Naive thymus-derived CD4-positive, alpha-beta T cell (primary cell): ENCODE measurements at regions of chrX and their contacts with region 1.

Region 1: DNA sequence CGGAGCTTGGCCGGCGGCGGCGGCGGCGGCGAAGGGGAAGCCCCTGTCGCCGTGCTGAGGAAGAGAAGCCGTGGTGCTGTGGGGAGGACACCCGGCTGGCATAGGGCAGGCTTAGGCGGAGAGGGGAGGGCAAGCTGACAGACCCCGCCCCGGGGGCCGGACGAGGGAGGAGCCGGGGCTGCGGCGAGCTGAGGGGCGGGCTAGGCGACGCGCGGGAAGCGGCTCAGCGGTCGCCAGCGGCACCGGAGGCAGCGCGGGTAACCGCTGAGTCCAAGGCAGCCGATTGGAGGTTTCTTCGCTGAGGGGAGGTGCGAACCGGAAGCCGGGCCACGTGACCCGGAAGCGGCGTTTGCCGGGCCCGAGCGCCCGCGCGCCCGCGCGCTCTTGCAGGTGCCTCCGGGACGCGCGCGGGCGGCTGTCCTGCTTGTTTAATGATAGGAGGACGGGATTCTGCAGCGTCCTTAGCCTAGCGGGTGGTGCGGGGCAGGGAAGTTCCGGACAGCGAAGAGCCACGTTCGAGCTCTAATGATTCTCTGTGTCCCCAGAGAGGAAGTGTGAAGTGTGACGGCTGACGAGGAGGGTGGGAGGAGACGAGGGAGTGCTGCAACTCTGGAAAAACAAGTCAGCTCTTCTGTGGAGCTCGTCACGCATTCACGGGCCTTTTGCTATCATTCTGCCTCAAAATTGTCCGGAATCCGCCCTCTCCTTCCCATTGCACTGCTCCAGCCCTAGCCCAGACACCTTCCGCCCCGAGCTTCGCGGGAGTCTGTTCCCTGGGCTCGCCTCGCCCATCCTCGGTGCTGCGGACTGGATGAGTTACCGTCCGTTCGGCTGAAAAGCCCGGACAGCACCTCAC is at the start of gene AP1S2:
- DNase-seq: peak; percentile 90 to 100 (median 99)
- ATAC-seq: peak; percentile 97
- H3K4me3 ChIP-seq: peak within 1 kb of the TSS; percentile 72
- H3K4me3 Mint-ChIP-seq: peak within 1 kb of the TSS; percentile 88 to 99 (median 94)
- H3K27ac ChIP-seq: peak within 1 kb of the TSS; percentile 87
- H3K27ac Mint-ChIP-seq: peak within 1 kb of the TSS; percentile 96 to 99 (median 98)
- H3K4me1 ChIP-seq: peaks cover 0 to 4% of the 10 kb centered on the region in 2 donors
- H3K4me1 Mint-ChIP-seq: peaks cover 3 to 35% (median 20%) of the 10 kb centered on the region in 7 donors
- H3K27me3 ChIP-seq: no peaks in the 10 kb centered on the region
- H3K27me3 Mint-ChIP-seq: peaks cover 0 to 4% (median 0%) of the 10 kb centered on the region in 5 donors
- total RNA-seq, gene AP1S2: 21.2 to 75.8 (median 25.4) TPM

Region 2: GRCh38 chrX:15737960-15738902 is 116.7 kb before region 1 on chrX and contains the start of gene CA5B:
- CTCF ChIA-PET with region 1: no interaction called
- POLR2A ChIA-PET with region 1: interaction called, 12 read pairs
- intact Hi-C with region 1: loop called (anchors 1 kb)
- DNase-seq: peak; percentile 93 to 100 (median 98)
- ATAC-seq: peak; percentile 98
- H3K4me3 ChIP-seq: peak within 1 kb of the TSS; percentile 82
- H3K4me3 Mint-ChIP-seq: peak within 1 kb of the TSS; percentile 89 to 99 (median 94)
- H3K27ac ChIP-seq: peak within 1 kb of the TSS; percentile 72
- H3K27ac Mint-ChIP-seq: peak within 1 kb of the TSS; percentile 71 to 95 (median 91)
- H3K4me1 ChIP-seq: peaks cover 16 to 19% of the 10 kb centered on the region in 2 donors
- H3K4me1 Mint-ChIP-seq: peaks cover 18 to 60% (median 43%) of the 10 kb centered on the region in 7 donors
- H3K27me3 ChIP-seq: no peaks in the 10 kb centered on the region
- H3K27me3 Mint-ChIP-seq: peaks cover 0 to 2% (median 0%) of the 10 kb centered on the region in 5 donors
- total RNA-seq, gene CA5B: 16.4 to 64.6 (median 39.5) TPM

Region 3: DNA sequence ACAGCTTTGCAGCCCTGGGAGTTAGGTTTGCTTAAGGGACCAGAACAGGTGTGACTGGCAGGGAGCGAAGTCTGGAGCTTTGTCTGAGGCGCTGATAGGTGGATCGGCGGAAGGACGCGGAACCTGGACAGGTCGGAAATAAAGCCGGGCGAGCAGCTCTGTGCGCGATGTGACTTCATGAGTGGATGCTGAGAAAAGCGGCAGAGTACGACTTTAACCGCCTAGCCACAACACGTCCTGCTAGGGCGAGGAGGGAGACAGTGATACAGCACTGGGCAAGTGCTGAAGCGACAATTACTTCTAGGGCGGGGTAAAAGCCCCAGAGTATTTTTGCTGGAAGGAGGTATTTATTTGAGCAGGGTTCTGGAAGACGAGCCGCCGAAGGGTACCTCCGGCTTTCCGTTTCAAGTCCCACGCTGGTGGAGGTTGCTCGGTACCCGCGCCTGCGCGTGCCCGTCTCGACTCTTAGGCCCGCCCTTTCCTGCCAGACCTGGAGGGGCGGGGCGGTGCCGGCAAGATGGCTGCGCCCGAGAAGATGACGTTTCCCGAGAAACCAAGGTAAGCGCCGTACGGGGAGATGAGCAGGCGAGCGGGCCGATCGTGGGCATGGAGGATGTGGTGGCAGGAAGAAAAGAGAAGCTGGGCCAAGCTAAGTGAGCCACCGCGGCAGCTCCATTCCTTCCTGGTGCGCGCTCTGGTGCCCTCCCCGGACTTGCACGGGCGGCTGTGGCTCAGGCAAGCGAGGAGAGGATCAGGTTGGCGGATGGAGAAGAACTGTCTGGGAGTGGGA is 64.8 kb before region 1 on chrX and contains the start of gene ZRSR2:
- CTCF ChIA-PET with region 1: no interaction called
- POLR2A ChIA-PET with region 1: interaction called, 18 read pairs
- intact Hi-C with region 1: loop called (anchors 1 kb)
- DNase-seq: peak; percentile 68 to 95 (median 91)
- ATAC-seq: peak; percentile 95
- H3K4me3 ChIP-seq: peak within 1 kb of the TSS; percentile 92
- H3K4me3 Mint-ChIP-seq: peak within 1 kb of the TSS in 1 of 10 donors; percentile 48
- H3K27ac ChIP-seq: peak within 1 kb of the TSS; percentile 93
- H3K27ac Mint-ChIP-seq: no peak within 1 kb of the TSS
- H3K4me1 ChIP-seq: peaks cover 9 to 10% of the 10 kb centered on the region in 2 donors
- H3K4me1 Mint-ChIP-seq: peaks cover 0 to 36% (median 24%) of the 10 kb centered on the region in 7 donors
- H3K27me3 ChIP-seq: no peaks in the 10 kb centered on the region
- H3K27me3 Mint-ChIP-seq: no peaks in the 10 kb centered on the region
- total RNA-seq, gene ZRSR2: 20.8 to 31.7 (median 25.4) TPM

Region 4: DNA sequence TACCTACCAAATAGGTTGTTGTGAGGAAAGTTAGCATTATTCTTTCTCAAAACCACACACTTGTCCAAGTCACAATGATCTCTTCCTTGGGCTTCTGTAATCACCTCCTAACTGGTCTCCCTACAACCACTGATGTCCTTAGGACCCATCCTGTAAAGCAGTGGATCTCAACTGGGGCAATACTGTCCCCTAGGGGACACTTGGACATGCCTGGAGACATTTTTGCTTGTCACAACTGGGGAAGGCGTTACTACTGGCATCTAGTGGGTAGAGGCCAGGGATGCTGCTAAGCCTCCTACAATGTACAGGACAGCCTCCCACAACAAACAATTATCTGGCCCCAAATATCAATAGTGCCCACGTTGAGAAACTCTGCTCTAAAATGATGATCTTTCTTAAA is 118.4 kb after region 1 on chrX:
- CTCF ChIA-PET with region 1: no interaction called
- POLR2A ChIA-PET with region 1: no interaction called
- intact Hi-C with region 1: loop called in 1 of 2 experiments (anchors 2 kb)
- DNase-seq: peak in 3 of 9 donors; percentile 1 to 14 (median 2)
- ATAC-seq: peak; percentile 54
- H3K4me3 ChIP-seq: no peak overlapping the region
- H3K4me3 Mint-ChIP-seq: no peak overlapping the region
- H3K27ac ChIP-seq: no peak overlapping the region
- H3K27ac Mint-ChIP-seq: no peak overlapping the region
- H3K4me1 ChIP-seq: no peaks in the 10 kb centered on the region
- H3K4me1 Mint-ChIP-seq: peaks cover 0 to 7% (median 0%) of the 10 kb centered on the region in 7 donors
- H3K27me3 ChIP-seq: no peaks in the 10 kb centered on the region
- H3K27me3 Mint-ChIP-seq: peaks cover 0 to 2% (median 0%) of the 10 kb centered on the region in 5 donors

Region 5: DNA sequence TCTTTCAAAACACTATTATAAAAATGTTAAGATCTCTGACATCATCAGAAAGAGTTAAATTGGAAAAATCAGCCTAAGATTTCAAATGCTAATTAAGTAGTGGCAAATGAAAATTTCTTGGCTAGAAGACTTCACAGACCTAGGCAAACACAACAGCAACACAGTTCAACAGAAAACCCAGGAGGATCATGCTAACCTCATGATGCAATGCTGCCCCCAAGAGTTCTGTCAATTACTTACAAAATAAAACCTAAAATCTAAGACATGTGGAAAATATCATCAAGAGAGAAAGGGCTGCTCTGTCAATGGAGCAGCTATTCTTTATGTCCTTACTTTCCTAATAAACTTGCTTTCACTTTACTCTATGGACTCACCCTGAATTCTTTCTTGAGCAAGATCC is 816.1 kb after region 1 on chrX:
- CTCF ChIA-PET with region 1: no interaction called
- POLR2A ChIA-PET with region 1: no interaction called
- intact Hi-C with region 1: loop called in 1 of 2 experiments (anchors 1 kb)
- DNase-seq: peak in 7 of 9 donors; percentile 13 to 57 (median 37)
- ATAC-seq: peak; percentile 64
- H3K4me3 ChIP-seq: no peak overlapping the region
- H3K4me3 Mint-ChIP-seq: no peak overlapping the region
- H3K27ac ChIP-seq: no peak overlapping the region
- H3K27ac Mint-ChIP-seq: peak overlapping the region in 1 of 9 donors; percentile 32
- H3K4me1 ChIP-seq: no peaks in the 10 kb centered on the region
- H3K4me1 Mint-ChIP-seq: peaks cover 0 to 5% (median 0%) of the 10 kb centered on the region in 7 donors
- H3K27me3 ChIP-seq: no peaks in the 10 kb centered on the region
- H3K27me3 Mint-ChIP-seq: no peaks in the 10 kb centered on the region

Region 6: DNA sequence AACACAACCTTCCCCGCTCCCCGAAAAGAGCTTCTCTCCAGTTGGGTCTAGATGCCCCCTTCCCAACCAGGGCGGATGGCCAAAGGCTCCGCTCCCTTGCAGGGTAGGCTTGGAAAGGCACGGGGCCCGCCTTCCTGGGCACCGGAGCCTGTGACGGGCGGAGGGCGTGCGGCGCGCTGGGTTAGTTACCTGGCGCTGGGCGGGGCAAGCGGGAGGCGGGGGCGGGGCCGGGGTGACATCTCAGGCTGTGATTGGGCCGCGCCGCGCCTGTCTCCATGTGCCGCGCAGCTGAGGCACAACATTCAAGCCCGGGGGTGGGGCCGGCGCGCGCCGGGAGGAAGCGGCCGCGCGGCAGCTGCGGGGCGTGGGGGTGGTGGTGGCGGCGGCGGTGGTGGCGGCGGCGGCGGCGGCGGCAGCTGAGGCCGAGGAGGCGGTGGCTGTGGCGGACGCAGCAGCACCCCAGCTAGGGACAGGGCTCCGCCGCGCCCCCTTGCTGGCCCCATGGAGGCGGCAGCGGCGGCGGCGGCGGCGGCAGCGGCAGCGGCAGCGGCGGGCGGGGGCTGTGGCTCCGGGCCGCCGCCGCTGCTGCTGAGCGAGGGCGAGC is 1091.5 kb after region 1 on chrX and contains the start of gene REPS2:
- CTCF ChIA-PET with region 1: no interaction called
- POLR2A ChIA-PET with region 1: interaction called, 3 read pairs
- intact Hi-C with region 1: loop called in 1 of 2 experiments (anchors 10 kb)
- DNase-seq: peak; percentile 51 to 82 (median 70)
- ATAC-seq: peak; percentile 98
- H3K4me3 ChIP-seq: peak within 1 kb of the TSS; percentile 39
- H3K4me3 Mint-ChIP-seq: peak within 1 kb of the TSS; percentile 77 to 88 (median 84)
- H3K27ac ChIP-seq: peak within 1 kb of the TSS; percentile 7
- H3K27ac Mint-ChIP-seq: peak within 1 kb of the TSS in 7 of 9 donors; percentile 51 to 86 (median 73)
- H3K4me1 ChIP-seq: no peaks in the 10 kb centered on the region
- H3K4me1 Mint-ChIP-seq: peaks cover 0 to 4% (median 0%) of the 10 kb centered on the region in 7 donors
- H3K27me3 ChIP-seq: no peaks in the 10 kb centered on the region
- H3K27me3 Mint-ChIP-seq: peaks cover 3 to 25% (median 6%) of the 10 kb centered on the region in 5 donors
- total RNA-seq, gene REPS2: 1.1 to 6.2 (median 1.9) TPM in 4 of 5 experiments, not detected in the other